ENCODE measurements at regions of chr5 and their contacts with region 1.

Region 1: DNA sequence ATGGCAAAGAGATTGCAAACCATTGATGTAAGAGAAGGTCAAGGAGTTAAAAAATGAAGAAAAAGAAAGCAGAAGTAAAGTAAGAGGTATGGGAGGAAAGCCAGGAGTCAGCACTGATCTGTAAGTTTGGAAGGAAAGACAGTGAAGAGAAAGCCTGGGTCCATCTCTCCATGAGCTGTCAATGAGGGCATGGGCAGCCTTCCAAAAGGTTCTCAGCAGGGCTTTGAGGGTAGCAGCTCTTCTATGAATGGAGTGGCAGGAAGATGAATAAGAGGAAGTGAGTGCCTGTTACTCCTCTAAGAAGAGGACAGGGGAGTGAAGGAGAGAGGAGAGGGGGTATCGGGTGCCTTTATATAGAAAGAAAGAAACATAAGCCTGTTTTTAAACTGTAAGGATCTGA is 97.1 kb downstream of the ADCY2 start:
- DNase-seq: no peak
- ATAC-seq: no peak

Region 2: GRCh38 chr5:7540771-7541485 is 47.8 kb after region 1 on chr5:
- intact Hi-C with region 1: loop called (anchors 2 kb)
- DNase-seq: no peak
- ATAC-seq: no peak

Measured in sciatic nerve (tissue), 2 donors.